Caco-2 (cell line): ENCODE measurements at regions of chr11 and their contacts with region 1.

Region 1: DNA sequence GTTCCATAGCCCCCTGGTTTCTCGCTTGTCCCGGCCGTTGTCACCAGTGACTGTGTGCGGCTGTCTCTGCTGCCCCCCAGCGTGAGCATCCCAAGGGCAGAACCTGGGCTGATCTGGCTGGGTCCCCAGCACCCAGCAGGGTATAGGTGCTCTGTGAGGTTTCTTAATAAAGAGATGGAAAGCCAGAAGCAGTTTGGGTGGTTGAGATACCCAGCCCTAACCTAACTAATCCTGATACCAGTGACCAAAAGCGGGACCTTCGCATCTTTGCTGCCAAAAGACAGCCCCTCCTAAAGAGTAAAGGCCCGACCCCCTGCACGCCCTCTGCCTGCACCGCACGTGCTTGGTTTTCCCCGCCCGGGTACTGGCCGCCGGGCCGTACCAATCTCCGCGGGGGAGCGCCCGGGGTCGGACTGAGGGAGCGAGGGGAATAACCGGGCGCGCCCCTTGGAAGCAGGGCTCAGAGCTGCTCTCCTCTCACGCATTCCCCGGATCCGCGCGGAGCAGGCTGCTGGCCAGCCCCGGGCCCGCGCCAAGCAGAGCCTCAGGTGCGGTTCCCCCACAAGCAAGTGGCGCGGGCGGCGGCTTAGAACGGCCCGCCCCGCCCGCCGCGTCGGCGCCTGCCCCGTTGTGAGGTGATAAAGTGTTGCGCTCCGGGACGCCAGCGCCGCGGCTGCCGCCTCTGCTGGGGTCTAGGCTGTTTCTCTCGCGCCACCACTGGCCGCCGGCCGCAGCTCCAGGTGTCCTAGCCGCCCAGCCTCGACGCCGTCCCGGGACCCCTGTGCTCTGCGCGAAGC is at the start of gene DGAT2:
- DNase-seq: peak; percentile 96
- H3K4me3 ChIP-seq: peak within 1 kb of the TSS; percentile 84
- H3K4me3 Mint-ChIP-seq: peak within 1 kb of the TSS; percentile 82
- H3K27ac Mint-ChIP-seq: peak within 1 kb of the TSS; percentile 98
- H3K4me1 ChIP-seq: peaks cover 20% of the 10 kb centered on the region
- H3K4me1 Mint-ChIP-seq: peaks cover 45% of the 10 kb centered on the region
- H3K27me3 ChIP-seq: no peaks in the 10 kb centered on the region
- H3K27me3 Mint-ChIP-seq: no peaks in the 10 kb centered on the region
- CTCF ChIP-seq: peak; percentile 83 to 97
- total RNA-seq, gene DGAT2: 73.6 and 75.8 TPM in 2 replicates

Region 2: DNA sequence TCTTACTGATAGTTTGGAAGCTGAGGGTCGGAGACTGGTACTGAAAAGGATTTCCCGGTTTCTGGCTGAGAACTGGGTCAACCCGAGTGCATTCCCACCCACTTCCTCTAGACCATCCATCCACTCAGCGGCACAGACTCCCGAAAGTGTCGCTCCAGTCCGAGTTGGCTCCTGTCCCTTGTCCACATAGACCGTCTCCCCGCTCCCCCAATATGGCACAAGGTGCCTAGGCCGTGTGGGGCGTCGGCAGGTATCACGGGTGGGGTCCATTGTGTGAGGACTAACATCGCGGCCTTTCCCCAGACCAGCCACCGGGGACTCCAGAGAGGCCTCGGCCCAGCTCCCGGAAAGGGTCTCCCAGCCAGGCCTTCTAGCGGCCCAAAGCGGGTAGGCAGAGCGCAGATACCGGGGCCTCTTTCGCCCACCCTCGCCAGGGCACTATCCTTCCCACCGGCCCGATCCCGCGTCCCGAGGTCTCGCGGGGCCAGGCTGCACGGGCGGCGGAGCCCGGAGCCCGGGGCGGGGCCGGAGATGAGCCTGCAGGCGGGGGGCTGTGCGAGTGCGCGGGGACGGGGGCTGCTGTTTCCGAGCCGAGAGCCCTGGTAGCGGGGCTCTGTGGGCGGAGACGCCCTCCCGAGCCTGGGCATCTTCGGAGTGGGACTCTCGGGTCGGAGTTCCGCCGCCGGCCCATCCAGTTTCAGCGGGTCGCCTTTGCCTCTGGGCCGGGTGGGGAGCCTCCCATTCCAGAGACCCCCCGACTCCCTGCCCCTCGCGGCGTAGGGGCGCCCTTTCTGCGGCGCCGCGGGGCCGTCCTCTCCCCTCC is 185.2 kb before region 1 on chr11:
- CTCF ChIA-PET with region 1: interaction called, 7 read pairs
- POLR2A ChIA-PET with region 1: interaction called, 8 read pairs
- intact Hi-C with region 1: loop called (anchors 1 kb)
- DNase-seq: peak; percentile 90 to 93
- H3K4me3 ChIP-seq: peak overlapping the region; percentile 75
- H3K4me3 Mint-ChIP-seq: peak overlapping the region; percentile 79
- H3K27ac Mint-ChIP-seq: peak overlapping the region; percentile 78
- H3K4me1 ChIP-seq: peaks cover 15% of the 10 kb centered on the region
- H3K4me1 Mint-ChIP-seq: peaks cover 21% of the 10 kb centered on the region
- H3K27me3 ChIP-seq: no peaks in the 10 kb centered on the region
- H3K27me3 Mint-ChIP-seq: no peaks in the 10 kb centered on the region
- CTCF ChIP-seq: peak; percentile 50 to 58

Region 3: GRCh38 chr11:75656044-75656727 is 112.1 kb before region 1 on chr11:
- CTCF ChIA-PET with region 1: no interaction called
- POLR2A ChIA-PET with region 1: no interaction called
- intact Hi-C with region 1: loop called (anchors 1 kb)
- DNase-seq: peak; percentile 82 to 96
- H3K4me3 ChIP-seq: no peak overlapping the region
- H3K4me3 Mint-ChIP-seq: peak overlapping the region; percentile 3
- H3K27ac Mint-ChIP-seq: peak overlapping the region; percentile 6
- H3K4me1 ChIP-seq: peaks cover 89% of the 10 kb centered on the region
- H3K4me1 Mint-ChIP-seq: peaks cover 65% of the 10 kb centered on the region
- H3K27me3 ChIP-seq: no peaks in the 10 kb centered on the region
- H3K27me3 Mint-ChIP-seq: no peaks in the 10 kb centered on the region
- CTCF ChIP-seq: peak; percentile 26 to 36

Region 4: GRCh38 chr11:75718419-75719339 is 49.6 kb before region 1 on chr11:
- CTCF ChIA-PET with region 1: interaction called, 6 read pairs
- POLR2A ChIA-PET with region 1: no interaction called
- intact Hi-C with region 1: loop called (anchors 1 kb)
- DNase-seq: no peak
- H3K4me3 ChIP-seq: no peak overlapping the region
- H3K4me3 Mint-ChIP-seq: no peak overlapping the region
- H3K27ac Mint-ChIP-seq: peak overlapping the region; percentile 65
- H3K4me1 ChIP-seq: peaks cover 28% of the 10 kb centered on the region
- H3K4me1 Mint-ChIP-seq: peaks cover 18% of the 10 kb centered on the region
- H3K27me3 ChIP-seq: no peaks in the 10 kb centered on the region
- H3K27me3 Mint-ChIP-seq: no peaks in the 10 kb centered on the region
- CTCF ChIP-seq: no peak

Region 5: GRCh38 chr11:75814686-75815344 is 46.5 kb after region 1 on chr11 and contains the start of gene UVRAG:
- CTCF ChIA-PET with region 1: interaction called, 6 read pairs
- POLR2A ChIA-PET with region 1: no interaction called
- intact Hi-C with region 1: loop called (anchors 1 kb)
- DNase-seq: peak; percentile 100
- H3K4me3 ChIP-seq: peak within 1 kb of the TSS; percentile 69
- H3K4me3 Mint-ChIP-seq: no peak within 1 kb of the TSS
- H3K27ac Mint-ChIP-seq: no peak within 1 kb of the TSS
- H3K4me1 ChIP-seq: peaks cover 10% of the 10 kb centered on the region
- H3K4me1 Mint-ChIP-seq: peaks cover 8% of the 10 kb centered on the region
- H3K27me3 ChIP-seq: no peaks in the 10 kb centered on the region
- H3K27me3 Mint-ChIP-seq: no peaks in the 10 kb centered on the region
- CTCF ChIP-seq: peak in 1 of 2 experiments; percentile 23
- total RNA-seq, gene UVRAG: 30.4 and 31.3 TPM in 2 replicates